ENCODE measurements at regions of chr13 and their contacts with region 1.

Region 1: DNA sequence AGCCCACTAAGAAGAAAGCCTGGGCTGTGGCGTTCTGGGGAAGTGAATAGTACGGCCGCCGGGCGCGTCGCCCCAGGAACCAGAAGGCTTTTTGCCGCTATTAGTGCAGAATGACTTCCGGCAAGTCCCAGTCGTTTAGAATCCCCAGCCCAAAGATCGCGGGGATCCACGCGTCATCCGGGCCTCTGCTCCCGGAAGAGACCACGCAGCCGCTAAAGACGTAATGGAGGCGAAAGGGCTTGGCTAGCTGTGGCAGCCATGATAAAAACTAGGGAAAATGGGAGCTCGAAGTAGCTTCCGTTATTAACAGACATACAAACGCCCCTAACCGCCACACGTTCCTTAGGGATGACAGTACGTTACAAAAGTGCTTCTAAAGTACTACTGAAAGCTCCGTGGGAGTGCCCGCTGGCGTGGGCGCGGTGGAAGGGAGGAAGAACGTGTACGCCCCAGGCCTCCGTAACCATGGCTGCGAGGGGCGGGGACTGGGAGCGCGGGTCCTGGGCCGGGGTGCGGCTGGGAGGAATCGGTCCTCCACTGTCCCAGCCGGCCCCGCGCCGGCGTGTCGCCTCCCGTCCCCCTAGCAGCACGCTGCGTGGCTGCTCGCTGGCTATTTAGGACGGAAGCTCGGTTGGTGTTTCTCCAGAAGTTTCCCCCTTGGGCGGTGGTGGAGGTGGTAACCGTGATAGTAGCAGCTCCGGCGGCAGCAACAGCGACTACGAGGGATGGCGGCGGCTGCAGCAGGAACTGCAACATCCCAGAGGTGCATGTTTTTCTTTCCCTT is at the start of gene SUGT1:
- DNase-seq: peak; percentile 88 to 98 (median 94)
- ATAC-seq: peak; percentile 91
- H3K4me3 ChIP-seq: peak within 1 kb of the TSS; percentile 85
- H3K4me3 Mint-ChIP-seq: no peak within 1 kb of the TSS
- H3K27ac ChIP-seq: peak within 1 kb of the TSS; percentile 93 to 97
- H3K27ac Mint-ChIP-seq: no peak within 1 kb of the TSS
- H3K4me1 ChIP-seq: peaks cover 26% of the 10 kb centered on the region
- H3K4me1 Mint-ChIP-seq: peaks cover 12% of the 10 kb centered on the region
- H3K27me3 ChIP-seq: no peaks in the 10 kb centered on the region
- H3K27me3 Mint-ChIP-seq: no peaks in the 10 kb centered on the region
- CTCF ChIP-seq: peak; percentile 58
- total RNA-seq, gene SUGT1: 18.5 to 20.1 TPM

Region 2: DNA sequence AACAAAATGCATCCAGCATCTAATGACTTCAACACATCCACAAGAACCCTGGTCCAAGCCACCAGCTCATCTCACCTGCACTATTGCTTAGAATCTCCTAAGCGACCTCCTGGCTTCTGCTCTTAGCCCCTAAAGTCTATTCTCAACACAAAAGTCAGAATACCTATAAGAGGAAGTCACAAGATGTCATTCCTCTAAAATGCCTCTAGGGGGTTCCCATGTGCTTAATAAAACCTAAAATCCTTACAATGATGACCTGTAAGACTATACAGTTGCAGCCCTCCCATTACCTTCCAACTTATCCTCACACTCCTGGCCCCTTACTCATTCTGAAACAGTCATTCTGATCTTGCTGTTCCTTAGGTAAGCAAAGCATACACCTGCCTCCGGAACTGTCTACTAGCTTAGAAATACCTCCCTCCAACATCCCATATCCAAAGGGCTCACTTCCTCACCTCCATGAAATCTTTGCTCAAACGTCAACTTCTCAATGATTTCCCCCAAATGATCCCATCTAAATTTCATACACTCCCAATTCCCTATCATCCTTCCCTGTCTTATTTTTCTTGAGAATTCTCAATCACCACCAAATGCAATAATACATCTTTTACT is 651.2 kb before region 1 on chr13:
- CTCF ChIA-PET with region 1: no interaction called
- POLR2A ChIA-PET with region 1: no interaction called
- intact Hi-C with region 1: loop called in 1 of 2 experiments (anchors 10 kb)
- DNase-seq: peak in 5 of 14 experiments; percentile 5 to 61 (median 51)
- ATAC-seq: peak; percentile 81
- H3K4me3 ChIP-seq: no peak overlapping the region
- H3K4me3 Mint-ChIP-seq: no peak overlapping the region
- H3K27ac ChIP-seq: no peak overlapping the region
- H3K27ac Mint-ChIP-seq: no peak overlapping the region
- H3K4me1 ChIP-seq: no peaks in the 10 kb centered on the region
- H3K4me1 Mint-ChIP-seq: peaks cover 4% of the 10 kb centered on the region
- H3K27me3 ChIP-seq: peaks cover 0 to 4% of the 10 kb centered on the region in 2 experiments
- H3K27me3 Mint-ChIP-seq: peaks cover 8% of the 10 kb centered on the region
- CTCF ChIP-seq: peak; percentile 85

Region 3: GRCh38 chr13:52617070-52618060 is 35.0 kb before region 1 on chr13:
- CTCF ChIA-PET with region 1: interaction called, 34 read pairs
- POLR2A ChIA-PET with region 1: interaction called, 148 read pairs
- intact Hi-C with region 1: loop called (anchors 1 kb)
- DNase-seq: peak; percentile 73 to 90 (median 81)
- ATAC-seq: peak; percentile 93
- H3K4me3 ChIP-seq: peak overlapping the region; percentile 81
- H3K4me3 Mint-ChIP-seq: peak overlapping the region; percentile 96
- H3K27ac ChIP-seq: peak overlapping the region; percentile 55 to 76
- H3K27ac Mint-ChIP-seq: peak overlapping the region; percentile 86
- H3K4me1 ChIP-seq: peaks cover 28% of the 10 kb centered on the region
- H3K4me1 Mint-ChIP-seq: peaks cover 42% of the 10 kb centered on the region
- H3K27me3 ChIP-seq: no peaks in the 10 kb centered on the region
- H3K27me3 Mint-ChIP-seq: no peaks in the 10 kb centered on the region
- CTCF ChIP-seq: no peak

Region 4: DNA sequence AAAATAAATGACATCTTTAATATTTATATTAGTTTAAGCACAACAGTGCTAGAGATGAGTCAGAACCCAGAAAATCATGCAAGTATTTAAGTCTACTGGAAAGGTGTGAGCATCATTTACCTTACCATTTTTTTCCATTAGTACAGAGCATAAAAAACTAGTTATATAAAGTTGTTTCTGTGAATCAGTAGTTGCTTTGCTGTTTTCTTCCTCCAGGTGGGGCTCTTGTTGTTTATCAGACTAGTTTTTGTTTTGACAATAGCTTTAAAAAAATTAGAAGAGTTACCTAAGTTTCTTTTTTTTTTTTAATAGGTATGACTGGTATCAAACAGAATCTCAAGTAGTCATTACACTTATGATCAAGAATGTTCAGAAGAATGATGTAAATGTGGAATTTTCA is 12.9 kb after region 1 on chr13:
- CTCF ChIA-PET with region 1: interaction called, 36 read pairs
- POLR2A ChIA-PET with region 1: interaction called, 24 read pairs
- intact Hi-C with region 1: no loop called
- DNase-seq: peak in 3 of 14 experiments; percentile 34 to 58 (median 48)
- ATAC-seq: peak; percentile 74
- H3K4me3 ChIP-seq: no peak overlapping the region
- H3K4me3 Mint-ChIP-seq: no peak overlapping the region
- H3K27ac ChIP-seq: no peak overlapping the region
- H3K27ac Mint-ChIP-seq: peak overlapping the region; percentile 51
- H3K4me1 ChIP-seq: no peaks in the 10 kb centered on the region
- H3K4me1 Mint-ChIP-seq: no peaks in the 10 kb centered on the region
- H3K27me3 ChIP-seq: no peaks in the 10 kb centered on the region
- H3K27me3 Mint-ChIP-seq: no peaks in the 10 kb centered on the region
- CTCF ChIP-seq: peak; percentile 61